Endothelial cell of umbilical vein (primary cell): ENCODE measurements at regions of chr13 and their contacts with region 1.

Region 1: GRCh38 chr13:28355822-28356371 is 139.0 kb downstream of the FLT1 start:
- DNase-seq: peak; percentile 93
- H3K4me3 ChIP-seq: no peak overlapping the region
- H3K27ac ChIP-seq: peak overlapping the region; percentile 97
- H3K4me1 ChIP-seq: peaks cover 74% of the 10 kb centered on the region
- H3K27me3 ChIP-seq: no peaks in the 10 kb centered on the region
- CTCF ChIP-seq: no peak
- POLR2A ChIP-seq: peak; percentile 66

Region 2: DNA sequence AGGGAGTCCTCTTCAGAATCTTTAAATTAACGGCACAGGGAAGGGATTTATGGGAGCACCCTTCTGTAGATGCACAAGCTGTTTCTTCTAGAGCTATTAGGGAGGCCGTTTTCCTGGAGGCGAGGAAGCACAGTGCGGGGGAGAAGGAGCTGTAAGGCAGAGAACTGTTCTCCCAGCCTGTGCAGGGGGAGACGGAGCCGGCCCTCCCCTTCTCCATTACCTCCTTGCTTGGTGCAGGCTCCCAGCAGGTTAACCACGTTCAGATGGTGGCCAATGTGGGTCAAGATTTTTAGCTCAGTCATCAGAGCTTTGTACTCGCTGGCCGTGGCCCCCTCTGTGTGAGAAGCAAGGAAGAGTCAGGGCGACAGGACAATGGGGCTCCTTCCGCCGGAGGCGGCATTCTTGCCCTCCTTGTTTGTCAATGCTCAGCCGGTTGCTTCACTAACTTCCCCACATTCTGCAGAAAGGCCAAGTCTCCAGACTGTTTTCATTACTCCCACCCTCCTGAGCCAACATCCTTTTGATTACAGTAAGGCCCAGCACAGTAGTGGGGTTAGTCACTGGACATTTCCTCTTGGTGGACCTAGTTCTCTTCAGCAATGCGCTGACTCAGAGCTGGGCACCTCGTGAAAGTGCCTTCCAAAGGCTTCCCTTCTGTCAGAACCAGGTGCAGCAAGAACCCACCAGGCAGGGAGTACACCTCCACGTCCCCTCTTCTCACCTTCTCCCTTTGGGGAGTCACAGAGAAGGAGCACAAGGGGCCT is 26.3 kb before region 1 on chr13:
- CTCF ChIA-PET with region 1: interaction called, 3 read pairs
- POLR2A ChIA-PET with region 1: no interaction called
- dilution Hi-C with region 1: no loop called
- intact Hi-C with region 1: loop called (anchors 1 kb)
- DNase-seq: peak; percentile 99
- H3K4me3 ChIP-seq: no peak overlapping the region
- H3K27ac ChIP-seq: peak overlapping the region; percentile 98
- H3K4me1 ChIP-seq: peaks cover 57% of the 10 kb centered on the region
- H3K27me3 ChIP-seq: no peaks in the 10 kb centered on the region
- CTCF ChIP-seq: no peak
- POLR2A ChIP-seq: peak; percentile 77

Region 3: DNA sequence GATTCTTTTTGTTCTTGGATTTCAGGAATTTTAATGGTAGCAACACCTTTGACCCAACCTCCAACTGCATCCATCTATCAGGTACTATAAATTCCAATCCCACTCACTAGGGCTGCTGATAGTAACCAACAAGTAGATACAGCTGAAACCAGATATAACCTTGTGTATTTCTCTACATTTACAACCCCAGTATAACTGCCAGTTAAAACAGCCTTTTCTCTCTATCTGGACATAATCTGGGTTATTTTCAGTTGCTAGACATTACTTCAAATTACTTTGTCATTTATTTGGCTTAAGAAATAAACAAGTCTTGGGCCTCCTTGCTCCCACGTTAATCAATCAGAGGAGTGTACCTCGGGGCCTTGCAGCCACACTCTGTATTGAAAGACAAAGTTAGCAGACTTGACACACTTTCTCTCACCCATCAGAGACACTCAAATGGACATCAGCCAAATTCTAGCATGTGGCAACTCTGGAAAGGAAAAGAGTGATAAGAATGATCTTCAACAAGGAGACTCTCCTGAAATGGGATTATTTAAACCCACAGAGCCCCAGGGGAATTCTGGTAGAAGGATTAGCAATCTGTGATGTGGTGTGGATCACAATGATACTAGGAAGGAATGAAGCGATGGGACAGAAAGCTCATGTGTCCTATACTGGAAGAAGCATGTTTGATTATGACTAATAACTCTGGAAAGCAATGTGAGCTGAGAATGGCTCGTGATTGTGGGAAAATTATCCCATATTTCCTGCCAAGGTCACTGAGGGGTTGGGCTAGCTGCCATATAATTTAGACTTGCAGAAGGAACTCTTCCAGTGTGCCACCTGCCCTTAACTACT is 18.5 kb before region 1 on chr13:
- CTCF ChIA-PET with region 1: interaction called, 3 read pairs
- POLR2A ChIA-PET with region 1: no interaction called
- dilution Hi-C with region 1: no loop called
- intact Hi-C with region 1: loop called (anchors 1 kb)
- DNase-seq: peak; percentile 97
- H3K4me3 ChIP-seq: no peak overlapping the region
- H3K27ac ChIP-seq: peak overlapping the region; percentile 80
- H3K4me1 ChIP-seq: peaks cover 74% of the 10 kb centered on the region
- H3K27me3 ChIP-seq: no peaks in the 10 kb centered on the region
- CTCF ChIP-seq: no peak
- POLR2A ChIP-seq: no peak

Region 4: GRCh38 chr13:28379371-28380083 is 23.6 kb after region 1 on chr13:
- CTCF ChIA-PET with region 1: interaction called, 3 read pairs
- POLR2A ChIA-PET with region 1: no interaction called
- dilution Hi-C with region 1: no loop called
- intact Hi-C with region 1: loop called (anchors 2 kb)
- DNase-seq: peak; percentile 86
- H3K4me3 ChIP-seq: no peak overlapping the region
- H3K27ac ChIP-seq: peak overlapping the region; percentile 58
- H3K4me1 ChIP-seq: peaks cover 34% of the 10 kb centered on the region
- H3K27me3 ChIP-seq: no peaks in the 10 kb centered on the region
- CTCF ChIP-seq: no peak
- POLR2A ChIP-seq: peak; percentile 20

Region 5: DNA sequence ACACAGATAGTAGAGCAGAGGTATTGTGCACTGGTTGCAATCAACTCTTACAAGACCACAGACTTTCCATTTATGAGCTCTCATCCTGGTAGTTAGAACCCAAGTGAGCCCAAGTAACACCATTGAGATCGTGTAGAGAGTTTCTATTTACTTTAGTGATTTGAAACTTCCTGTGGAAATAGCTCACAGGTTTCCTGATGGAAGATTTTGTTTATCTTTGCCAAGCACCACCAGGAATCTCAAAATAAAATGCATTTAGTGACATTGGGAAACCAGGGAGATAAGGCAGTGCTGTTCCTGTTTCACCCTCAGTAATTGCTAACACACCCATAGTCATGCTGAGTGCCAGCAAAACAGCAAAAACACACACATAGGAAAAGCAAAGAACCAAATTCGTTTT is 36.5 kb after region 1 on chr13:
- CTCF ChIA-PET with region 1: interaction called, 4 read pairs
- POLR2A ChIA-PET with region 1: interaction called, 3 read pairs
- dilution Hi-C with region 1: no loop called
- intact Hi-C with region 1: loop called (anchors 1 kb)
- DNase-seq: peak; percentile 91
- H3K4me3 ChIP-seq: no peak overlapping the region
- H3K27ac ChIP-seq: peak overlapping the region; percentile 88
- H3K4me1 ChIP-seq: peaks cover 89% of the 10 kb centered on the region
- H3K27me3 ChIP-seq: no peaks in the 10 kb centered on the region
- CTCF ChIP-seq: no peak
- POLR2A ChIP-seq: no peak

Region 6: GRCh38 chr13:28718543-28719226 is 362.8 kb after region 1 on chr13 and contains the start of gene SLC46A3:
- CTCF ChIA-PET with region 1: no interaction called
- POLR2A ChIA-PET with region 1: no interaction called
- dilution Hi-C with region 1: no loop called
- intact Hi-C with region 1: loop called (anchors 1 kb)
- DNase-seq: peak; percentile 99
- H3K4me3 ChIP-seq: peak within 1 kb of the TSS; percentile 43 to 61 (median 48)
- H3K27ac ChIP-seq: peak within 1 kb of the TSS; percentile 6
- H3K4me1 ChIP-seq: peaks cover 30% of the 10 kb centered on the region
- H3K27me3 ChIP-seq: no peaks in the 10 kb centered on the region
- CTCF ChIP-seq: peak in 1 of 2 donors; percentile 15
- POLR2A ChIP-seq: no peak
- total RNA-seq, gene SLC46A3: 2.1 and 3.9 TPM in 2 replicates

Region 7: GRCh38 chr13:28805193-28805819 is 449.4 kb after region 1 on chr13:
- CTCF ChIA-PET with region 1: no interaction called
- POLR2A ChIA-PET with region 1: no interaction called
- dilution Hi-C with region 1: no loop called
- intact Hi-C with region 1: no loop called
- DNase-seq: no peak
- H3K4me3 ChIP-seq: no peak overlapping the region
- H3K27ac ChIP-seq: no peak overlapping the region
- H3K4me1 ChIP-seq: no peaks in the 10 kb centered on the region
- H3K27me3 ChIP-seq: peaks cover 0 to 5% of the 10 kb centered on the region in 2 experiments
- CTCF ChIP-seq: peak; percentile 44 to 47
- POLR2A ChIP-seq: no peak